CD4-positive, alpha-beta T cell (primary cell): ENCODE measurements at regions of chrX and their contacts with region 1.

Region 1: GRCh38 chrX:40933132-40933705 is 152.0 kb upstream of the USP9X start:
- DNase-seq: peak in 4 of 14 experiments; percentile 21 to 53 (median 47)
- ATAC-seq: peak; percentile 49
- H3K4me3 ChIP-seq: peak overlapping the region; percentile 43
- H3K4me3 Mint-ChIP-seq: peak overlapping the region; percentile 92
- H3K27ac ChIP-seq: peak overlapping the region; percentile 29 to 66
- H3K27ac Mint-ChIP-seq: peak overlapping the region; percentile 92
- H3K4me1 ChIP-seq: peaks cover 22% of the 10 kb centered on the region
- H3K4me1 Mint-ChIP-seq: peaks cover 14% of the 10 kb centered on the region
- H3K27me3 ChIP-seq: no peaks in the 10 kb centered on the region
- H3K27me3 Mint-ChIP-seq: no peaks in the 10 kb centered on the region
- CTCF ChIP-seq: no peak

Region 2: DNA sequence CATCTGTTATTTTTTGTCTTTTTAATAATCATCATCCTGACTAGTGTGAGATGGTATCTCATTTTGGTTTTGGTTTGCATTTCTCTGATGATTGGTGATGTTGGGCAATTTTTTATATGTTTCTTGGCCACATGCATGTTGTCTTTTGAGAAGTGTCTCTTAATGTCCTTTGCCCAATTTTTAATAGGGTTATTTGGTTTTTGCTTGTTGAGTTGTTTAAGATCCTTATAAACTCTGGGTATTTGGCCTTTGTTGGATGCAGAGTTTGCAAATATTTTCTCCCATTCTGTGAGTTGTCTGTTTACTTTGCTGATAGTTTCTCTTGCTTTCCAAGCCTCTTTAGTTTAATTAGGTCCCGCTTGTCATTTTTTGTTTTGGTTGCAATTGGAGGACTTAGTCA is 45.7 kb before region 1 on chrX:
- CTCF ChIA-PET with region 1: no interaction called
- POLR2A ChIA-PET with region 1: no interaction called
- intact Hi-C with region 1: no loop called
- DNase-seq: no peak
- ATAC-seq: no peak
- H3K4me3 ChIP-seq: no peak overlapping the region
- H3K4me3 Mint-ChIP-seq: no peak overlapping the region
- H3K27ac ChIP-seq: no peak overlapping the region
- H3K27ac Mint-ChIP-seq: no peak overlapping the region
- H3K4me1 ChIP-seq: no peaks in the 10 kb centered on the region
- H3K4me1 Mint-ChIP-seq: no peaks in the 10 kb centered on the region
- H3K27me3 ChIP-seq: no peaks in the 10 kb centered on the region
- H3K27me3 Mint-ChIP-seq: no peaks in the 10 kb centered on the region
- CTCF ChIP-seq: no peak

Region 3: GRCh38 chrX:41010188-41010846 is 77.1 kb after region 1 on chrX:
- CTCF ChIA-PET with region 1: no interaction called
- POLR2A ChIA-PET with region 1: interaction called, 5 read pairs
- intact Hi-C with region 1: loop called in 1 of 2 experiments (anchors 10 kb)
- DNase-seq: peak in 13 of 14 experiments; percentile 6 to 79 (median 29)
- ATAC-seq: peak; percentile 87
- H3K4me3 ChIP-seq: peak overlapping the region; percentile 49
- H3K4me3 Mint-ChIP-seq: peak overlapping the region; percentile 84
- H3K27ac ChIP-seq: peak overlapping the region; percentile 21 to 73
- H3K27ac Mint-ChIP-seq: peak overlapping the region; percentile 89
- H3K4me1 ChIP-seq: peaks cover 12% of the 10 kb centered on the region
- H3K4me1 Mint-ChIP-seq: peaks cover 23% of the 10 kb centered on the region
- H3K27me3 ChIP-seq: no peaks in the 10 kb centered on the region
- H3K27me3 Mint-ChIP-seq: no peaks in the 10 kb centered on the region
- CTCF ChIP-seq: no peak

Region 4: DNA sequence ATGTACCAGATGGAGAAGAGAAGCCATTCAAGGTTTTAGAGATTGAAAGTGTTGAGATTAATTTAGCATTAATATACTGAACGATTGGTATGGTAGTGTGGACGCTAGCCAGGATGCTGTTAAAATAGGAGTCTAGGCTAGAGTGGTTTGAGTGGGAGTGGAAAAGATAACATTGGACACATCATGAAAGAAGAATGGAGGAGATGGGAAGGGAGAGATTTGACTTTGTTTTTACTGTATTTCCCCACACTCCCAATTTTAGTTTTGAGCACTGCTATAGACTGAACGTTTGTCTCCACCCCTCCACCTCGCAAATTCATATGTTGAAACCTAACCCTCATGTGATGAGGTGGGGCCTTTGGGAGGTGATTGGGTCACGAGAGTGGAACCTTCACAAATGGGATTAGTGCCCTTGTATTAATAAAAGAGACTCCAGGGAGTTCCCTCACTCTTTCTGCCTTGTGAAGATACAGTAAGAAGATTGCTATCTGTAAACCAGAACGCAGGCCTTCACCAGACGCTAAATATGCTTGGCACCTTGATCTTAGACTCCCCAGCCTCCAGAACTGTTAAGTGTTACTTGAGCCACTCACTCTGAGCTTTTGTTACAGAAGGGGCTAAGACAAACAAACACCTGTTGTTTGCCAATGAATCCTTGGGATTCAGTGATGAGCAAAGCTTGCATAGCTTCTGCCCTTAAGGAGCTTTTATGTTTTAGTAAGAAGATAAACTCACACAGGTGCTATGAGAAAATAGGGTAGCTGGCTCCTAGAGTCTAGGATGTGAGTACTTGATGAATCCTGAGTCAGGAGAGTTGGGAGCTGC is 177.8 kb after region 1 on chrX:
- CTCF ChIA-PET with region 1: no interaction called
- POLR2A ChIA-PET with region 1: interaction called, 4 read pairs
- intact Hi-C with region 1: loop called (anchors 5 kb)
- DNase-seq: peak in 2 of 14 experiments; percentile 23 to 34
- ATAC-seq: no peak
- H3K4me3 ChIP-seq: no peak overlapping the region
- H3K4me3 Mint-ChIP-seq: peak overlapping the region; percentile 69
- H3K27ac ChIP-seq: no peak overlapping the region
- H3K27ac Mint-ChIP-seq: peak overlapping the region; percentile 69
- H3K4me1 ChIP-seq: peaks cover 21% of the 10 kb centered on the region
- H3K4me1 Mint-ChIP-seq: peaks cover 76% of the 10 kb centered on the region
- H3K27me3 ChIP-seq: no peaks in the 10 kb centered on the region
- H3K27me3 Mint-ChIP-seq: no peaks in the 10 kb centered on the region
- CTCF ChIP-seq: no peak